ENCODE measurements at regions of chr17 and their contacts with region 1.

Region 1: GRCh38 chr17:8041249-8041928 is 2.5 kb downstream of the ALOX15B start:
- DNase-seq: peak; percentile 69
- ATAC-seq: no peak
- H3K4me3 Mint-ChIP-seq: no peak overlapping the region
- H3K27ac Mint-ChIP-seq: no peak overlapping the region
- H3K4me1 Mint-ChIP-seq: peaks cover 3% of the 10 kb centered on the region
- H3K27me3 Mint-ChIP-seq: peaks cover 35% of the 10 kb centered on the region

Region 2: GRCh38 chr17:7744416-7744815 is 297.0 kb before region 1 on chr17:
- CTCF ChIA-PET with region 1: interaction called, 19 read pairs
- POLR2A ChIA-PET with region 1: no interaction called
- DNase-seq: no peak
- ATAC-seq: no peak
- H3K4me3 Mint-ChIP-seq: no peak overlapping the region
- H3K27ac Mint-ChIP-seq: no peak overlapping the region
- H3K4me1 Mint-ChIP-seq: no peaks in the 10 kb centered on the region
- H3K27me3 Mint-ChIP-seq: peaks cover 15% of the 10 kb centered on the region

Region 3: DNA sequence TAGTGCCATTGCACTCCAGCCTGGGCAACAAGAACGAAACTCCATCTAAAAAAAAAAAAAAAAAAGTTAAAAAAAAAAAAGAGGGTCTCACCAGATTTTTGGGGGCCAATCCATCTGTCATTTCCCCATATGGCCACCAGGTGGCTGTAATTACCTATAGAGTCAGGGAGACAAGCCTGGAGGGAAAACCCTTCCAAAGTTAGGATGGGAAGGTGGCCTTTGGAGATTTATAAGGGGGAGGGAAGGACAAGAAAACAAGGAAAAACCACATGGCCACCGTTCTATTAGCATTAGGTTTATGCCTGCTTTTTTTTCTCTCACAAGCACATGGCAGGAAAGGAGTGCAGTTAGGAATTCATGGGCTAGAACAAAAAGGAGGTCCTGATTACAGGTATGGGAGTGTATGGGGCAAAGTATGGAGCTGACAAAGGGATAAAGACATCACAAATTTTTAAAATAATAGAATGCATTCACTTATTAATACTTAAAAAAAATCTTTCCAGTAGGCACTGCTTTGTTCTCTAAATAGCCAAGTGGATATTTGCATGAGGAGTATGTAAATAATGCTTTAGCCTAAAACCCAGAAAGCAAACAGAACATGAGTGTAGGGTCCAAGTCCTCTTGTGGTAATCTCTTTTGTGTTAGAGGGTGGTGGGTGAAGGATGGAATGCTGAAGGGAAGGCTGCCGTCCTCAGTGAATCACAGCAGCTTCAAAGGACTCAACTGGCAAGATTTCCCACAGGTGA is 178.5 kb before region 1 on chr17:
- CTCF ChIA-PET with region 1: interaction called, 10 read pairs
- POLR2A ChIA-PET with region 1: no interaction called
- DNase-seq: peak; percentile 61
- ATAC-seq: no peak
- H3K4me3 Mint-ChIP-seq: no peak overlapping the region
- H3K27ac Mint-ChIP-seq: no peak overlapping the region
- H3K4me1 Mint-ChIP-seq: peaks cover 20% of the 10 kb centered on the region
- H3K27me3 Mint-ChIP-seq: no peaks in the 10 kb centered on the region

Region 4: GRCh38 chr17:7959503-7960253 is 81.7 kb before region 1 on chr17:
- CTCF ChIA-PET with region 1: no interaction called
- POLR2A ChIA-PET with region 1: no interaction called
- DNase-seq: no peak
- ATAC-seq: no peak
- H3K4me3 Mint-ChIP-seq: no peak overlapping the region
- H3K27ac Mint-ChIP-seq: no peak overlapping the region
- H3K4me1 Mint-ChIP-seq: no peaks in the 10 kb centered on the region
- H3K27me3 Mint-ChIP-seq: peaks cover 16% of the 10 kb centered on the region

Region 5: GRCh38 chr17:7982666-7983065 is 58.7 kb before region 1 on chr17:
- CTCF ChIA-PET with region 1: no interaction called
- POLR2A ChIA-PET with region 1: no interaction called
- DNase-seq: no peak
- ATAC-seq: no peak
- H3K4me3 Mint-ChIP-seq: no peak overlapping the region
- H3K27ac Mint-ChIP-seq: no peak overlapping the region
- H3K4me1 Mint-ChIP-seq: no peaks in the 10 kb centered on the region
- H3K27me3 Mint-ChIP-seq: peaks cover 28% of the 10 kb centered on the region

Region 6: DNA sequence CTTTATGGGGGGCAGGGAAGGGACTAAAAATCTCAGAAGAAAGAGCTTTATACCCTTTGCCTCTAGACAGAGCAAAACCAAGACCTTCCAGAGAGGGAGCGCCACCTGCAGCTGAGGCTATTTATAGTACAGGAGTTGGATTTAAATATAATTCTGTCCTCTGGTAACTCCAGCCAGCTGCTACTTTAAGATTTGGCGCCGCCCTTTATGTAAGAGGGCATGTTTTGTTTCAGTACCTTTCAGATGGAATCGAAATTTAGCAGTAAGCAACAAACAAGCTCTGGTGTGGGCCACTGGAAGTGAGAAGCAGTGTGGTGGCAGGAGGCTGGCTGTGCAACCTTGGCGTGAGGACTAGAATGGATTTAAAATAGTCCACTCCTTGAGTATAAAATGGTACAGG is 44.2 kb before region 1 on chr17:
- CTCF ChIA-PET with region 1: interaction called, 23 read pairs
- POLR2A ChIA-PET with region 1: no interaction called
- DNase-seq: peak; percentile 69
- ATAC-seq: peak; percentile 83
- H3K4me3 Mint-ChIP-seq: no peak overlapping the region
- H3K27ac Mint-ChIP-seq: no peak overlapping the region
- H3K4me1 Mint-ChIP-seq: peaks cover 12% of the 10 kb centered on the region
- H3K27me3 Mint-ChIP-seq: peaks cover 40% of the 10 kb centered on the region

Region 7: DNA sequence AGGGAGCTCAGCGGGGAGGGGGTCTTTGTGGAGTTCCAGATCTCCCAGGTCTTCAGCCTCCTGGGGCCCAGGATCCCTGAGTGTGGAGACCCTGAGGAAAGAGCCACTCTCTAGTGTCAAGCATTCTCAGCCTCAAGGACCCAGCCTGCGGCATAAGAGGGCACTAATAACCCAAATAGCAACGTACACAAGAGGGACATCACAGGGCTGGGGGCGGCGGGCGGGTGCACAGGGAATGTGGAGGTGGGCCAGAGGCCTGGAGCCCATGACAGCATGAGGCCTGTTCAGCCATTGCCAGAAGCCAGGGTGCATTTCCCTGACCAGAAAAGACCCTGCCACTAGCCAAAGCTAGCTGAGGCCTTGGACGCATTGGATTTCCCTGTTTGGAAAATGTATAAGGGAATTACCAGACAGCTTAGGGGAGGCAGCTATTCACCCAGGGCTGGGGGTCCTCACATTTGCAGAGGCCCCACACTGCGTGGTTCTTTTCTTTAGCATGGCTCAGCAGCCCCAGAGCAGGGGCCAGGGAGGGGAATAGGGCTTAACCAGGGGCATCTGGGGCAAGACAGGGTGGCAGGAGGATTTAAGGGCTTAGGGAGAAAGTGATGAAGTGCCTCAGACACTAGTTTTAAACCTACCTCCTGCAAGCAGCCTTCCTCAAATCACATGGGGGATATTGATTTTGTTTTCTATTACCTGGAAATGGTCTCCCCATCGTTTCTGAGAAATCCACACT is 16.0 kb before region 1 on chr17:
- CTCF ChIA-PET with region 1: interaction called, 18 read pairs
- POLR2A ChIA-PET with region 1: interaction called, 3 read pairs
- DNase-seq: no peak
- ATAC-seq: no peak
- H3K4me3 Mint-ChIP-seq: no peak overlapping the region
- H3K27ac Mint-ChIP-seq: no peak overlapping the region
- H3K4me1 Mint-ChIP-seq: no peaks in the 10 kb centered on the region
- H3K27me3 Mint-ChIP-seq: peaks cover 24% of the 10 kb centered on the region